Activated CD4-positive, alpha-beta T cell treated with anti-CD3 and anti-CD28 coated beads, Interleukin-2, amount 10 ng/mL, durations not matched to agents 24 days and 14 days (primary cell): ENCODE measurements at regions of chr5 and their contacts with region 1.

Region 1: DNA sequence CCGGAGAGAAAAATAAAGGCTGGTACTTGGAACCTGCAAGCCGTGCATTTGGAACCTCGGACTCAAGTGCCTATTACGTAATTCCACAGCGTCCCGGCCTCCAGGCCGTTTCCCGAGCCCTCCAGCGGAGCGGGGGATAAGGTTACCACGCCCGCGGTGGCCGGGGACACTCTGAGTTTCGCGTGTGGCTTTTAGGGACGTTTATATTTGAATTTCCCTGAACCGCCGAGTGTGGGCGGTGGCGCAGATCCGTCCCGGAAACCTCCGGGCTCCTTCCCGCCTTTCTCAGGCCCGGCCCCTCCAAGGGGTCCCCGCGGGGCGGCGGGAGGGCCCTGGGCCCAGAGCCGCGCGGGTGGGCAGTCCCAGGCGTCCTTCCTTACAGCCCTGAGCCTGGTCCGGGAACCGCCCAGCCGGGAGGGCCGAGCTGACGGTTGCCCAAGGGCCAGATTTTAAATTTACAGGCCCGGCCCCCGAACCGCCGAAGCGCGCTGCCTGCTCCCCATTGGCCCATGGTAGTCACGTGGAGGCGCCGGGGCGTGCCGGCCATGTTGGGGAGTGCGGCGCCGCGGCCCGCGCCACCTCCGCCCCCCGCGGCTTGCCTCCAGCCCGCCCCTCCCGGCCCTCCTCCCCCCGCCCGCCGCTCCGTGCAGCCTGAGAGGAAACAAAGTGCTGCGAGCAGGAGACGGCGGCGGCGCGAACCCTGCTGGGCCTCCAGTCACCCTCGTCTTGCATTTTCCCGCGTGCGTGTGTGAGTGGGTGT is at the start of gene LMNB1:
- DNase-seq: peak; percentile 99
- H3K4me3 Mint-ChIP-seq: peak within 1 kb of the TSS; percentile 97
- H3K27ac Mint-ChIP-seq: peak within 1 kb of the TSS; percentile 98
- H3K4me1 Mint-ChIP-seq: peaks cover 30% of the 10 kb centered on the region
- H3K27me3 Mint-ChIP-seq: no peaks in the 10 kb centered on the region
- total RNA-seq, gene LMNB1: 223 and 225 TPM in 2 replicates

Region 2: DNA sequence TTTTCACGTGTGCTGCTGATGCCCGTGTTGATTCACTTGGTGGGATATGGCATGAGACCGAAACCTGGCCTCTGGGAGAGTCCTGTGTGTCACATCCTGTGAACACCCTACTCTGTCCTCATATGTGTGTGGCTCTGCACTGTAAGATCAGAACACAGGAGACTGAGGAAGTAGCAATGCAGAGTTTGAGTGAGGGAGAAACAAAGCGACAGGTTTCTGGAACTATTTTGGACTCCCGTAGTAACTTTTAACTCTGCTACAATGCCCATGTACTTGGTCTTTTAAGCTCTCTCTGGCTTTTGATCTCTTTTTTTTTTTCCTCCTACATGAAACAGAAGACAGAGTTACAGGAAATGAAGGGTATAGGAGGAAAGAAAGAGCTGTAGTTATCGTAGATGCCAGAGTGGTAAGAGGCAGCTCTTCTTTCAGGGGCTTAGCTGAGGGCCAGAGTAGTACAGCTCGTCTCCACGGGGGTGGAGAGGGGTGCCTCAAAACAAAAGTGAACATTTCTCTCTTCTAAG is 326.9 kb before region 1 on chr5:
- intact Hi-C with region 1: loop called (anchors 10 kb)
- DNase-seq: peak; percentile 88
- H3K4me3 Mint-ChIP-seq: peak overlapping the region; percentile 91
- H3K27ac Mint-ChIP-seq: peak overlapping the region; percentile 100
- H3K4me1 Mint-ChIP-seq: peaks cover 57% of the 10 kb centered on the region
- H3K27me3 Mint-ChIP-seq: no peaks in the 10 kb centered on the region

Region 3: GRCh38 chr5:126676195-126676624 is 100.5 kb before region 1 on chr5:
- intact Hi-C with region 1: loop called (anchors 1 kb)
- DNase-seq: peak; percentile 91
- H3K4me3 Mint-ChIP-seq: no peak overlapping the region
- H3K27ac Mint-ChIP-seq: no peak overlapping the region
- H3K4me1 Mint-ChIP-seq: peaks cover 22% of the 10 kb centered on the region
- H3K27me3 Mint-ChIP-seq: no peaks in the 10 kb centered on the region

Region 4: GRCh38 chr5:126745259-126745992 is 31.3 kb before region 1 on chr5:
- intact Hi-C with region 1: loop called (anchors 1 kb)
- DNase-seq: no peak
- H3K4me3 Mint-ChIP-seq: no peak overlapping the region
- H3K27ac Mint-ChIP-seq: no peak overlapping the region
- H3K4me1 Mint-ChIP-seq: peaks cover 37% of the 10 kb centered on the region
- H3K27me3 Mint-ChIP-seq: no peaks in the 10 kb centered on the region

Region 5: DNA sequence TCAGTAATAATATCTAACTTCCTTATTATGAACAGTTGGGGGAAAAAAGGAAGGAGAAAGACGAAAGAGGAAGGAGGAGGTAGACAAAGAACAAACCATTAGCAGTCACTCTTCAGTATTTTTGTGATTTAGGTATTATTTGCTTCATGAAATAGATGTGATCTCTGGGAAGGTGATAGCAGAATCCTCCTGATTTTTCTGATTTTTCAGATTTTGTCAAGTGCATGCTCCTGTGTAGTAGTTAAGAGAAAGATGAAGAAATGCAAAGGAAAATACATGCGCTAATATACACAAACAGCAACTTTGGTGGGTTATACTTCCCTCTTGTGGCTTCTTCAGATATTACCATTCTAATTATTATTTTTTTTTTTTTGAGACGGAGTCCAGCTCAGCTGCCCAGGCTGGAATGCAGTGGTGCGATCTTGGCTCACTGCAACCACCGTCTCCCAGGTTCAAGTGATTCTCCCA is 31.9 kb after region 1 on chr5:
- intact Hi-C with region 1: loop called (anchors 1 kb)
- DNase-seq: no peak
- H3K4me3 Mint-ChIP-seq: no peak overlapping the region
- H3K27ac Mint-ChIP-seq: peak overlapping the region; percentile 82
- H3K4me1 Mint-ChIP-seq: peaks cover 47% of the 10 kb centered on the region
- H3K27me3 Mint-ChIP-seq: no peaks in the 10 kb centered on the region

Region 6: GRCh38 chr5:126909856-126910255 is 133.2 kb after region 1 on chr5:
- intact Hi-C with region 1: no loop called
- DNase-seq: no peak
- H3K4me3 Mint-ChIP-seq: no peak overlapping the region
- H3K27ac Mint-ChIP-seq: no peak overlapping the region
- H3K4me1 Mint-ChIP-seq: no peaks in the 10 kb centered on the region
- H3K27me3 Mint-ChIP-seq: no peaks in the 10 kb centered on the region

Region 7: GRCh38 chr5:126920291-126920690 is 143.6 kb after region 1 on chr5:
- intact Hi-C with region 1: no loop called
- DNase-seq: no peak
- H3K4me3 Mint-ChIP-seq: no peak overlapping the region
- H3K27ac Mint-ChIP-seq: no peak overlapping the region
- H3K4me1 Mint-ChIP-seq: no peaks in the 10 kb centered on the region
- H3K27me3 Mint-ChIP-seq: no peaks in the 10 kb centered on the region

Region 8: GRCh38 chr5:127030259-127031146 is 253.8 kb after region 1 on chr5 and contains the start of gene MARCHF3:
- intact Hi-C with region 1: loop called (anchors 2 kb)
- DNase-seq: peak; percentile 99
- H3K4me3 Mint-ChIP-seq: peak within 1 kb of the TSS; percentile 92
- H3K27ac Mint-ChIP-seq: peak within 1 kb of the TSS; percentile 75
- H3K4me1 Mint-ChIP-seq: peaks cover 10% of the 10 kb centered on the region
- H3K27me3 Mint-ChIP-seq: peaks cover 37% of the 10 kb centered on the region
- total RNA-seq, gene MARCHF3: 2.3 and 4.2 TPM in 2 replicates

Region 9: GRCh38 chr5:127396490-127397155 is 619.9 kb after region 1 on chr5:
- intact Hi-C with region 1: no loop called
- DNase-seq: no peak
- H3K4me3 Mint-ChIP-seq: no peak overlapping the region
- H3K27ac Mint-ChIP-seq: no peak overlapping the region
- H3K4me1 Mint-ChIP-seq: no peaks in the 10 kb centered on the region
- H3K27me3 Mint-ChIP-seq: peaks cover 13% of the 10 kb centered on the region

Region 10: DNA sequence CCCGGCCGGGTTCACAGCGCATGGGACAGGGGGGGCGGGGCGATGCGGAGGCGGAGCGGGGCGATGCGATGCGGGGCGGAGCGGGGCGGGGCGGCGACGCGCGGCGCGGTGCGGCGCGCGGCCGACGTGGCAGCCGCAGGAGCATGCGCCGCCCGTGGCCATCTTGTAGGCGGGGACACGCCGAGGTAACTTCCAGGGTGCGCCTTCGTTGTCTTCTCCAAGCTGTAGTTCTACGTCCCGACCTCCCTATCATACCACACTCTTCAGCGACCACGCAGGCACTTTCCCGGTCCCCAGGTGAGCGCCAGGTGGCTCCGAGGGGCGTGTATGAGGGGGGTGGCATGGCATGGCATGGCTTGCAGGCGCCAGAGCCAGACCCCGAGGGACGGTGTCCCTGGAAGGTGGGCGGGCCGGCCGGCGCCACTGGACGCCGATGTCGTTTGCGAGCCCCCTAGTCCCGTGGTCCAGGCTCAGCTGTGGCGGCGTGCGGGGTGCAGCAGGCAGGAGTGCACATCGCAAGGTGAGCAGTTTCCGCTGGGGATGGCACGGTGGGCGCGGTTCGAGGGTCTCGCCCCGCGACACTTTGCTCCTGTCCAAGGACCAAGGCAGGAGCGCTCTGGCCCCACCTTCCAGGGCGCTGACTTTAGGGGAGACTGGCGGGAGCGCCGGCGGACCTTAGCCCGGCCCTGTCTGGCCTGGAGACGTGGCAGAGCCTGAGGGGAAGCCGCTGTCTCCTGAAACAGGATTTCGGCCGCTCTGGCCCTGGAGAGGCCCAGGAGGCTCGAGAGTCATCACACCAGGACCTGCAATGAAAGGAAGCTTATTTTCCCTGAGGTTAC is 741.0 kb after region 1 on chr5 and contains the start of gene PRRC1:
- intact Hi-C with region 1: loop called (anchors 1 kb)
- DNase-seq: peak; percentile 94
- H3K4me3 Mint-ChIP-seq: peak within 1 kb of the TSS; percentile 86
- H3K27ac Mint-ChIP-seq: peak within 1 kb of the TSS; percentile 84
- H3K4me1 Mint-ChIP-seq: peaks cover 25% of the 10 kb centered on the region
- H3K27me3 Mint-ChIP-seq: peaks cover 13% of the 10 kb centered on the region
- total RNA-seq, gene PRRC1: 50.4 and 52.3 TPM in 2 replicates